Activated T-helper 1 cell treated with anti-CD3 and anti-CD28 coated beads, Interleukin-12 subunit alpha, Interleukin-12 subunit beta, Interleukin-2, Interleukin-4 antibody, amounts not matched to agents 30 ng/mL and 10 ng/mL and 1 ng/mL, durations not matched to agents 14 hours and 24 hours and 36 hours (primary cell): ENCODE measurements at regions of chr12 and their contacts with region 1.

Region 1: GRCh38 chr12:81644503-81644902 is 114.6 kb downstream of the PPFIA2 start:
- DNase-seq: no peak
- H3K4me3 Mint-ChIP-seq: no peak overlapping the region
- H3K27ac Mint-ChIP-seq: no peak overlapping the region
- H3K4me1 Mint-ChIP-seq: no peaks in the 10 kb centered on the region
- H3K27me3 Mint-ChIP-seq: no peaks in the 10 kb centered on the region

Region 2: DNA sequence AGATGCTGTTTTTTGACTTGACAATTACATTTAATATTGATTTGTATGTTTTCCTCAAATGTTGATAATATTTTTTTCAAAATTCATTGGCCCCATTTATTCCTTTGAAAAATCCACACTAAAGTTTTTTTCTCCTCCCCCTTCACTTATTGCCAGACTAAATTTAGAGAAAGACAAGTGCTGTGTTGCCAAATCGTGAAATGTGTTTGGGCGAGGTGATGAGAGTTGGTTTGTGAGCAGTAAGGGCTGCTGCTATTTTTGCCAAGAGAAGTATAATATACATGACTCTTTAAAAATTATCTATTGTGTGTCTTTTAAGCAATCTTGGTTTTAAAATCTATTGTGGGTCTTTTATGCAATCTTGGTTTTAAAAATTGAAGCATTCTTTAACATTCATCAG is 74.3 kb before region 1 on chr12:
- intact Hi-C with region 1: no loop called
- DNase-seq: no peak
- H3K4me3 Mint-ChIP-seq: no peak overlapping the region
- H3K27ac Mint-ChIP-seq: no peak overlapping the region
- H3K4me1 Mint-ChIP-seq: no peaks in the 10 kb centered on the region
- H3K27me3 Mint-ChIP-seq: no peaks in the 10 kb centered on the region

Region 3: GRCh38 chr12:81992461-81992860 is 348.0 kb after region 1 on chr12:
- intact Hi-C with region 1: loop called (anchors 1 kb)
- DNase-seq: peak; percentile 1
- H3K4me3 Mint-ChIP-seq: no peak overlapping the region
- H3K27ac Mint-ChIP-seq: no peak overlapping the region
- H3K4me1 Mint-ChIP-seq: no peaks in the 10 kb centered on the region
- H3K27me3 Mint-ChIP-seq: peaks cover 8% of the 10 kb centered on the region

Region 4: GRCh38 chr12:82019533-82019932 is 375.0 kb after region 1 on chr12:
- intact Hi-C with region 1: loop called (anchors 1 kb)
- DNase-seq: no peak
- H3K4me3 Mint-ChIP-seq: no peak overlapping the region
- H3K27ac Mint-ChIP-seq: no peak overlapping the region
- H3K4me1 Mint-ChIP-seq: no peaks in the 10 kb centered on the region
- H3K27me3 Mint-ChIP-seq: no peaks in the 10 kb centered on the region

Region 5: GRCh38 chr12:82326905-82327503 is 682.5 kb after region 1 on chr12:
- intact Hi-C with region 1: loop called (anchors 1 kb)
- DNase-seq: no peak
- H3K4me3 Mint-ChIP-seq: no peak overlapping the region
- H3K27ac Mint-ChIP-seq: no peak overlapping the region
- H3K4me1 Mint-ChIP-seq: no peaks in the 10 kb centered on the region
- H3K27me3 Mint-ChIP-seq: peaks cover 3% of the 10 kb centered on the region

Region 6: GRCh38 chr12:82358200-82359114 is 714.0 kb after region 1 on chr12 and contains the starts of genes CCDC59 and METTL25:
- intact Hi-C with region 1: loop called (anchors 2 kb)
- DNase-seq: peak; percentile 94
- H3K4me3 Mint-ChIP-seq: peak within 1 kb of the TSS; percentile 94
- H3K27ac Mint-ChIP-seq: peak within 1 kb of the TSS; percentile 98
- H3K4me1 Mint-ChIP-seq: peaks cover 53% of the 10 kb centered on the region
- H3K27me3 Mint-ChIP-seq: no peaks in the 10 kb centered on the region
- total RNA-seq, gene CCDC59: 84.7 and 101 TPM in 2 replicates
- total RNA-seq, gene METTL25: 6.9 and 8.4 TPM in 2 replicates